ENCODE measurements at regions of chr13 and their contacts with region 1.

Region 1: DNA sequence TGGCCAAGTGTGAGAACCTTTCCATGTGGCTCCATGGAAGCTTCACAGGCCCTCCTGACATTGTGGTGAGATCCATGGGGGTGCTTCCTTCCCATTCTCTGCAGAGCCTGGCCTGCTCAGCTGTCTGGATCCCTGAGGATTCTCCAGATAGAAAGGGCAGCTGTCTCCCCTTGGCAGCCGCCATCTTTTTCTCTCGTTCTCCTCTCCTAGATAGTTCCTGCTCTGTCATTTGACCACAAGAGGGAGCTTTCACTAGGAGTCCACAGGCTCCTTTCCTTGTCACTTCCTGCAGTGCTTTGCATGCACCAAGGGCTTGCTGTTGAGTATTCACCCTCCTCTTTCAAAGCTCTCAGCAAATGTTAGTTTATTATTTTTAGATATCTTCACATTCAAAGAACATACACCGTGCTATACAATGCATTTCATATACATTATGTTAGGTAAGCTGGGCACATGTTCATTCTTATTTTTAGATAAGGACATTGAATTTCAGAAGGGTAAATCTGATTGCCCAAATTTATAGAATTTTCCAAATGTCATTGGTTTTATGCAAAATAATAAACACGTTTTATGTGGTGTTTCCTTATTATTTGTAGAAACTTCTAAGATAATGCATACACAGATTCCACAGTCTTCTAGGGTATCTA is 133.2 kb downstream of the FRY start:
- DNase-seq: peak; percentile 20
- H3K4me3 ChIP-seq: no peak overlapping the region
- H3K27ac ChIP-seq: no peak overlapping the region
- H3K27me3 ChIP-seq: no peaks in the 10 kb centered on the region
- CTCF ChIP-seq: peak; percentile 73

Region 2: GRCh38 chr13:32136716-32137115 is 28.0 kb before region 1 on chr13:
- CTCF ChIA-PET with region 1: interaction called, 10 read pairs
- POLR2A ChIA-PET with region 1: no interaction called
- DNase-seq: no peak
- H3K4me3 ChIP-seq: no peak overlapping the region
- H3K27ac ChIP-seq: no peak overlapping the region
- H3K27me3 ChIP-seq: no peaks in the 10 kb centered on the region
- CTCF ChIP-seq: no peak

Region 3: GRCh38 chr13:32175943-32176342 is 11.2 kb after region 1 on chr13:
- CTCF ChIA-PET with region 1: interaction called, 20 read pairs
- POLR2A ChIA-PET with region 1: no interaction called
- DNase-seq: no peak
- H3K4me3 ChIP-seq: no peak overlapping the region
- H3K27ac ChIP-seq: no peak overlapping the region
- H3K27me3 ChIP-seq: no peaks in the 10 kb centered on the region
- CTCF ChIP-seq: no peak

Region 4: DNA sequence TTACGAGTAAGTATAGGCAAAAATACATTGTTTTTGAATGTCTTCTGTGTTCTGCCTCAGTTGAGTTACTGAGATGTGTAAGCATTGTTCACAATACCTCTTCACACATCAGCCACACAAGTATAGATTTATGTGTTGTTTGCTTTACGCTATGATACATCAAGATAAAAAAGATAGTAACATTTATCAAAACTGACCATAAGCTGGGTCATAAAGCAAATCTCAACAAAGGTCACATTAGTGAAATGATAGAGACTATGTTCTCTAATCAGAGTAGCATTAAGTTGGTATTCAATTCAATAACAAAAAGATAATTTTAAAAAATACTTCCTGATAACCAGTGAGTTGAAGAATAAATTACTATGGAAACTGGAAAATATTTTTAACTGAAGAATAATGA is 22.9 kb after region 1 on chr13:
- CTCF ChIA-PET with region 1: interaction called, 11 read pairs
- POLR2A ChIA-PET with region 1: no interaction called
- DNase-seq: no peak
- H3K4me3 ChIP-seq: no peak overlapping the region
- H3K27ac ChIP-seq: no peak overlapping the region
- H3K27me3 ChIP-seq: no peaks in the 10 kb centered on the region
- CTCF ChIP-seq: no peak

Region 5: GRCh38 chr13:32211813-32212212 is 47.1 kb after region 1 on chr13:
- CTCF ChIA-PET with region 1: interaction called, 10 read pairs
- POLR2A ChIA-PET with region 1: interaction called, 7 read pairs
- DNase-seq: peak; percentile 92
- H3K4me3 ChIP-seq: no peak overlapping the region
- H3K27ac ChIP-seq: peak overlapping the region; percentile 89
- H3K27me3 ChIP-seq: no peaks in the 10 kb centered on the region
- CTCF ChIP-seq: no peak

Region 6: GRCh38 chr13:32246468-32246867 is 81.7 kb after region 1 on chr13:
- CTCF ChIA-PET with region 1: interaction called, 16 read pairs
- POLR2A ChIA-PET with region 1: no interaction called
- DNase-seq: no peak
- H3K4me3 ChIP-seq: no peak overlapping the region
- H3K27ac ChIP-seq: no peak overlapping the region
- H3K27me3 ChIP-seq: no peaks in the 10 kb centered on the region
- CTCF ChIP-seq: peak; percentile 83

Measured in AG04450 (cell line).